ENCODE measurements at regions of chr21 and their contacts with region 1.

Region 1: DNA sequence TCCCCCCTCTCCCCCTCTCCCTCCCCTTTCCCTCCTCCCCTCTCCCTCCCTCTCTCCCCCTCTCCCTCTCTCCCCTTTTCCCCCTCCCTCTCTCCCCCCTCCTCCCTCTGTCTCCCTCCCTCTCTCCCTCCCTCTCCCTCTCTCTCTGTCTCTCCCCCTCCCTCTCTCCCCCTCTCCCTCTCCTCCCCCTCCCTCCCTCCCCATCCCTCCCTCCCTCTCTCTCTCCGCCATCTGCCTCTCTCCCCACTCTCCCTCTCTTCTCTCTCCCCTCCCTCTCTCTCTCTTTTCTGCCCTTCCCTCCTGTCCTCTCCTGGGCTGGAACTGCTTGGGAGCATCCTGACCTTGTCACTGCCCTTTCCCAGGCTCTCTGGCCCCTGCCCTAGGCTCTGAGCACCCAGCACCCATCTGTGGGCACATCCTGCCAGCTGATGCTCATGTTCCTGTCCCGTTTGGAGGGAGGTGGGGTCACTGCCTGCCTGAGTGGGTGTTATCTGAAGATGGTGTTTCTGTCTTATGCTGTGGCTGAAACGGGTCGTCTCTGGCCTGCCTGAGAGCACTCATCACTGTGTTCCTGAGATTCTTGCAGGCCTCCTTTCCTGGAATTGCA is 10.8 kb downstream of the FTCD start:
- DNase-seq: no peak
- H3K4me3 ChIP-seq: no peak overlapping the region
- H3K4me3 Mint-ChIP-seq: peak overlapping the region in 3 of 7 donors; percentile 26 to 44 (median 38)
- H3K27ac ChIP-seq: no peak overlapping the region
- H3K27ac Mint-ChIP-seq: peak overlapping the region in 4 of 8 donors; percentile 19 to 80 (median 39)
- H3K4me1 ChIP-seq: no peaks in the 10 kb centered on the region
- H3K4me1 Mint-ChIP-seq: peaks cover 8 to 9% (median 9%) of the 10 kb centered on the region in 3 donors
- H3K27me3 ChIP-seq: no peaks in the 10 kb centered on the region
- H3K27me3 Mint-ChIP-seq: peaks cover 0 to 6% of the 10 kb centered on the region in 2 donors

Region 2: DNA sequence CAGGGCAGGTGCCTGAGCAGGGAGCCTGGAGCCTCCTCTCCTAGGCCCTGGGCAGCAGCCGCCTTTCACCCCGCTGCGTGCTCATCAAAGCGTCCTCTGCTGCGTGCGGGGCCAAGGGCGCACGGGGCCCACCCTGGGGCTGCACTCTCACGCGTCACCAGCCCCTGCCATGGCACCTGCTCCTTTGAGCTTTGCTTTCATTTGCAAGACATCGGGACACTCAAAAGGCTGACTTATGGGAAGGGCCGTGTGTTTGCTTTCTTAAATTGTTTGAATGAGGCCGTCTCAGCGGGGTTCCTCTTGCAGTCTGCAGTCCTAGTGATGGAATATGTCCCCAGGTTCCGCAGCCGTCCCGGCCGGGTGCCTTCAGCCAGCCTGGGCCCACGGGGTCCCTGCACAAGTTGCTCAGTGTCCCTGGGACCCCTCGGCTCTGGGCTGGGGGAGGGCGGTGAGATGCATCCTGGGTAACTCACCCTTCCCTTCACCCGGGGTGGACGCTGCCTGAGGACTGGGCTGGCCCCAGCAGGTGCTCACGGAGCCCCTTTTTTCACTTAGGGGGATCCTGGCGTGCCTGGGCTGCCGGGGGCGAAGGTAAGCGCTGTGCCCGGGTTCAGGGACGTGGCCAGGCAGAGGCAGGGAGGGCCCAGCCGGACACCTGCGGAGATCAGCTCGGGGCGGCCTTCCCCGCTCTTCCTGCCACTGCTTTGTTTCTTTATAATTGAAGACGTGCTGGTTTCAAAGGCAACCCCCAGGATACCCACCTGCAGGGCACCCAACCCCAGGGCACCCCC is 655.4 kb before region 1 on chr21:
- CTCF ChIA-PET with region 1: no interaction called
- POLR2A ChIA-PET with region 1: no interaction called
- DNase-seq: no peak
- H3K4me3 ChIP-seq: no peak overlapping the region
- H3K4me3 Mint-ChIP-seq: no peak overlapping the region
- H3K27ac ChIP-seq: no peak overlapping the region
- H3K27ac Mint-ChIP-seq: no peak overlapping the region
- H3K4me1 ChIP-seq: peaks cover 4% of the 10 kb centered on the region
- H3K4me1 Mint-ChIP-seq: peaks cover 3 to 8% (median 6%) of the 10 kb centered on the region in 3 donors
- H3K27me3 ChIP-seq: no peaks in the 10 kb centered on the region
- H3K27me3 Mint-ChIP-seq: no peaks in the 10 kb centered on the region

Region 3: GRCh38 chr21:45836694-45837670 is 307.6 kb before region 1 on chr21:
- CTCF ChIA-PET with region 1: no interaction called
- POLR2A ChIA-PET with region 1: no interaction called
- DNase-seq: no peak
- H3K4me3 ChIP-seq: no peak overlapping the region
- H3K4me3 Mint-ChIP-seq: no peak overlapping the region
- H3K27ac ChIP-seq: no peak overlapping the region
- H3K27ac Mint-ChIP-seq: no peak overlapping the region
- H3K4me1 ChIP-seq: no peaks in the 10 kb centered on the region
- H3K4me1 Mint-ChIP-seq: no peaks in the 10 kb centered on the region
- H3K27me3 ChIP-seq: no peaks in the 10 kb centered on the region
- H3K27me3 Mint-ChIP-seq: peaks cover 5 to 10% of the 10 kb centered on the region in 2 donors

Region 4: GRCh38 chr21:45973659-45974072 is 170.9 kb before region 1 on chr21:
- CTCF ChIA-PET with region 1: interaction called, 16 read pairs
- POLR2A ChIA-PET with region 1: interaction called, 4 read pairs
- DNase-seq: peak; percentile 65 to 84 (median 70)
- H3K4me3 ChIP-seq: peak overlapping the region; percentile 78
- H3K4me3 Mint-ChIP-seq: peak overlapping the region; percentile 82 to 96 (median 89)
- H3K27ac ChIP-seq: peak overlapping the region; percentile 16
- H3K27ac Mint-ChIP-seq: peak overlapping the region in 7 of 8 donors; percentile 41 to 88 (median 80)
- H3K4me1 ChIP-seq: peaks cover 28% of the 10 kb centered on the region
- H3K4me1 Mint-ChIP-seq: peaks cover 11 to 30% (median 14%) of the 10 kb centered on the region in 3 donors
- H3K27me3 ChIP-seq: peaks cover 33% of the 10 kb centered on the region
- H3K27me3 Mint-ChIP-seq: peaks cover 20 to 35% of the 10 kb centered on the region in 2 donors

Region 5: GRCh38 chr21:46228345-46229051 is 83.9 kb after region 1 on chr21 and contains the start of gene LSS:
- CTCF ChIA-PET with region 1: interaction called, 14 read pairs
- POLR2A ChIA-PET with region 1: no interaction called
- DNase-seq: peak; percentile 98 to 99 (median 98)
- H3K4me3 ChIP-seq: peak within 1 kb of the TSS; percentile 65
- H3K4me3 Mint-ChIP-seq: peak within 1 kb of the TSS; percentile 81 to 98 (median 93)
- H3K27ac ChIP-seq: peak within 1 kb of the TSS; percentile 76
- H3K27ac Mint-ChIP-seq: peak within 1 kb of the TSS; percentile 57 to 99 (median 96)
- H3K4me1 ChIP-seq: peaks cover 29% of the 10 kb centered on the region
- H3K4me1 Mint-ChIP-seq: peaks cover 43 to 68% (median 54%) of the 10 kb centered on the region in 3 donors
- H3K27me3 ChIP-seq: no peaks in the 10 kb centered on the region
- H3K27me3 Mint-ChIP-seq: no peaks in the 10 kb centered on the region
- total RNA-seq, gene LSS: 19.6 to 20.4 TPM

Region 6: GRCh38 chr21:46285761-46286496 is 141.4 kb after region 1 on chr21 and contains the start of gene YBEY:
- CTCF ChIA-PET with region 1: interaction called, 12 read pairs
- POLR2A ChIA-PET with region 1: no interaction called
- DNase-seq: peak; percentile 75 to 87 (median 81)
- H3K4me3 ChIP-seq: peak within 1 kb of the TSS; percentile 69
- H3K4me3 Mint-ChIP-seq: peak within 1 kb of the TSS; percentile 85 to 99 (median 97)
- H3K27ac ChIP-seq: peak within 1 kb of the TSS; percentile 70
- H3K27ac Mint-ChIP-seq: peak within 1 kb of the TSS; percentile 74 to 99 (median 98)
- H3K4me1 ChIP-seq: peaks cover 40% of the 10 kb centered on the region
- H3K4me1 Mint-ChIP-seq: peaks cover 40 to 67% (median 58%) of the 10 kb centered on the region in 3 donors
- H3K27me3 ChIP-seq: no peaks in the 10 kb centered on the region
- H3K27me3 Mint-ChIP-seq: no peaks in the 10 kb centered on the region
- total RNA-seq, gene YBEY: 16.7 to 18.6 TPM

Measured in CD8-positive, alpha-beta memory T cell (primary cell).